ENCODE measurements at regions of chr12 and their contacts with region 1.

Region 1: DNA sequence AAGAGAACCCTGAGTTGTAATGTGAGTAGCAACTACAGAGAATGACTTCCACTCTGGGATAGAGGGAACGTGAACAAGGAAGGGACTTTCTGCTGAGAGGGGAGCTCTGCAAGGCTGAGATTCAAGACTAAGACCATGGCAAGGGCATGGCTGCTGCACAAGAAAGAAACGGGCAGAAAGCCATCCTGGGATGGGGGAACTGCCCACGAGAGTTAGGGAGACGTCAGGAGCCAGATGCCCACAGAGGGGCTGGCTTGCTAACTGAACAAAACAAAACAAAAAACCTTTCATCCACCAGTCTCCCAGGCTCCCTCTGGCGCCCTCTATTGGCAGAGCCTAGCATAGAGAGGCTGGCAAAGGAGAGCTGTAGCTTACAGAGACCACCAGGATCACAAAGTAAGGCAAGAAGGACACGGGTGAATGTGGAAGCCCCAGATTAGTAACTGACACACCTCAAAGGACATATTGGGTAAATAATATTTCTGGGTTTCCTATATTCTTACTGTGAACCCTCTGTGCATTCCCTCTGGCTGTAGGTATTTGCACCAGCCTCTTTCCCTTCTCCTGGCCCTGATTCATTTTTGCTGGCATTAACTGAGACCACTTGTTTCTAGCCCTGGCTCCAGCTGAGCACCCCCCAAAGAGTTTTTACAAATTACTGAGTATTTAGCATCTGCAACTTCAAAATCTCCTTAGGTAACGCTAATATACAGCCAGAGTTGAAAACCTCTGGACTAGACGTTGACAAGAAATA is 338.3 kb downstream of the EMP1 start:
- DNase-seq: peak; percentile 68 to 82
- ATAC-seq: peak; percentile 71
- H3K4me3 ChIP-seq: no peak overlapping the region
- H3K27ac ChIP-seq: no peak overlapping the region
- H3K4me1 ChIP-seq: peaks cover 0 to 2% of the 10 kb centered on the region in 2 donors
- H3K27me3 ChIP-seq: no peaks in the 10 kb centered on the region

Region 2: GRCh38 chr12:13278249-13278787 is 256.5 kb before region 1 on chr12:
- intact Hi-C with region 1: loop called (anchors 1 to 10 kb)
- DNase-seq: peak; percentile 69 to 91
- ATAC-seq: peak; percentile 92
- H3K4me3 ChIP-seq: no peak overlapping the region
- H3K27ac ChIP-seq: no peak overlapping the region
- H3K4me1 ChIP-seq: no peaks in the 10 kb centered on the region
- H3K27me3 ChIP-seq: no peaks in the 10 kb centered on the region

Region 3: GRCh38 chr12:13289653-13290289 is 245.1 kb before region 1 on chr12:
- intact Hi-C with region 1: loop called in 1 of 2 experiments (anchors 10 kb)
- DNase-seq: no peak
- ATAC-seq: peak; percentile 73
- H3K4me3 ChIP-seq: no peak overlapping the region
- H3K27ac ChIP-seq: no peak overlapping the region
- H3K4me1 ChIP-seq: no peaks in the 10 kb centered on the region
- H3K27me3 ChIP-seq: no peaks in the 10 kb centered on the region

Region 4: GRCh38 chr12:13362260-13362841 is 172.5 kb before region 1 on chr12:
- intact Hi-C with region 1: loop called in 1 of 2 experiments (anchors 2 kb)
- DNase-seq: peak in 1 of 2 donors; percentile 79
- ATAC-seq: peak; percentile 81
- H3K4me3 ChIP-seq: no peak overlapping the region
- H3K27ac ChIP-seq: no peak overlapping the region
- H3K4me1 ChIP-seq: no peaks in the 10 kb centered on the region
- H3K27me3 ChIP-seq: no peaks in the 10 kb centered on the region

Region 5: DNA sequence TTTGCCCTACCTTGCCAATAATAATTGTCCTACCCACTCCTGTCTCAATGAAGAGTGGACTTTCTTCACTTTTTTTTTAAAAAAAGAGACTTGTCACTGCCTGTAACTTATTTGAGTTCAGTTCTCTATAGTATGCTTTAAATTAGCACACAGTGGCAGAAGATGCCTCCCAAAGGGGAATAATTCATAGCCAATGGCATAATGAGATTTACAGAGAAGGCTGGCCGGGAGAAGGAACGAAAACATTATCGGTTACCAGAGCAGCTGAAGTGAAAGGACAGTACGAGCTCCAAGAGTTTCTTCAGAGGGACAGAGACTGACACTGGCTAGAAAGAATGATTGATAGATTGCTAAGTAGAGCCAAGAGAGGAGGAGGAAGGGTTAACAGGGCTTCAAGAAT is 18.0 kb after region 1 on chr12:
- intact Hi-C with region 1: no loop called
- DNase-seq: no peak
- ATAC-seq: no peak
- H3K4me3 ChIP-seq: no peak overlapping the region
- H3K27ac ChIP-seq: no peak overlapping the region
- H3K4me1 ChIP-seq: no peaks in the 10 kb centered on the region
- H3K27me3 ChIP-seq: no peaks in the 10 kb centered on the region

Measured in aorta (tissue), 5 donors.